ENCODE measurements at regions of chr15 and their contacts with region 1.

Region 1: DNA sequence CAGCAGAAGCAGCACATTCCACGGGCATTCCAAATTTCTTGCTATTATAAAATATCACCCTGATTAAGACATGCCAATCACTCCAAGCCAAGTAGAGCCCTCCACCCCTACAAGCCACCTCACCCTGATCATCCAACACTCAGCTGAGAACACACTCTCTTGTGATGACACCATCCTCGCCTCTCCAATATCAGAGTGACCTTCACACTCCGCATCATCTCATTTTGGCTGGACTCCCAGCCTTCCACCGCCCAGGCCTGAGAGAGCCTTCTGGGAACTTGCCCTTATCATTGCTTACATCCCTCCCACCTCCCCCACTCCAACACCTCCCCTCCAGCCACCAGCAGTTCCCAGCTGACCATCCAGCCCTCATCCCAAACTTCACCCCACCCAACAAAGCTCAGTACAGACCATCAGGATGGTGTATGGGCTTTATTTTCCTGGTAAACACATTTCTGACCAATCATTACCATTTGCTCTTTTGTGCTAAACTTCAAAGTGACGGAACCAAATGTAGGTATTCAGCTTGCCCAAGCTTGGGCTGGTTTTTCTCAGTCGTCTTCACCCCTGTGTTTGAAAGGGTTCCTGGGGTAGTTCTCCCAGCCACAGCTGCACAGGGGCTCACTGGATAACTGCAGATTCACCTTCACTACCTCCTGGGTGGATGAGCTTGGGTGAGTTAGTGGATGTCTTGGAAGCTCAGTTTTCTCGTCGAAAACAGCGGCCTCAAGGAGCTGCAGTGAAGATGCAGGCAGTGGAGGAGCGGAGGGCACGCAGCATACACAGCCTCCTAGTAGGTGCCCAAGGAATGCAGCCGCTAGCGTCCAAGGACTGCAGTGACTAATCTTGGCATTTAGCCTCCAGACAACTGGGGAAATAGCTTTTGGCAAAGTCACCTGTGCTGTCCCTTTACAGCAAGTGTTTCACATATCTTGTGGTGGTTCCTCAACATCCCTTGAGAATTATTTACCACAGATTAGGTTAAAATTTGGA is 115.1 kb downstream of the LIPC start:
- DNase-seq: no peak
- ATAC-seq: peak; percentile 90

Region 2: GRCh38 chr15:58528188-58528870 is 18.6 kb before region 1 on chr15:
- intact Hi-C with region 1: loop called (anchors 1 kb)
- DNase-seq: no peak
- ATAC-seq: peak; percentile 70

Region 3: GRCh38 chr15:58666957-58667356 is 120.0 kb after region 1 on chr15:
- intact Hi-C with region 1: loop called (anchors 5 kb)
- DNase-seq: no peak
- ATAC-seq: no peak